Activated CD4-positive, alpha-beta T cell treated with anti-CD3 and anti-CD28 coated beads for 36 hours (primary cell): ENCODE measurements at regions of chr17 and their contacts with region 1.

Region 1: GRCh38 chr17:21043286-21044232 is 748 bp upstream of the USP22 start:
- DNase-seq: peak; percentile 99
- ATAC-seq: peak; percentile 88
- H3K4me3 Mint-ChIP-seq: peak overlapping the region; percentile 76
- H3K27ac Mint-ChIP-seq: peak overlapping the region; percentile 95
- H3K4me1 Mint-ChIP-seq: peaks cover 21% of the 10 kb centered on the region
- H3K27me3 Mint-ChIP-seq: no peaks in the 10 kb centered on the region

Region 2: GRCh38 chr17:19977311-19978208 is 1066.0 kb before region 1 on chr17 and contains the start of gene AKAP10:
- CTCF ChIA-PET with region 1: no interaction called
- POLR2A ChIA-PET with region 1: no interaction called
- intact Hi-C with region 1: loop called in 1 of 2 experiments (anchors 2 kb)
- DNase-seq: peak; percentile 98
- ATAC-seq: peak; percentile 85
- H3K4me3 Mint-ChIP-seq: peak within 1 kb of the TSS; percentile 90
- H3K27ac Mint-ChIP-seq: peak within 1 kb of the TSS; percentile 98
- H3K4me1 Mint-ChIP-seq: peaks cover 48% of the 10 kb centered on the region
- H3K27me3 Mint-ChIP-seq: no peaks in the 10 kb centered on the region
- total RNA-seq, gene AKAP10: 31.6 to 35.9 TPM

Region 3: DNA sequence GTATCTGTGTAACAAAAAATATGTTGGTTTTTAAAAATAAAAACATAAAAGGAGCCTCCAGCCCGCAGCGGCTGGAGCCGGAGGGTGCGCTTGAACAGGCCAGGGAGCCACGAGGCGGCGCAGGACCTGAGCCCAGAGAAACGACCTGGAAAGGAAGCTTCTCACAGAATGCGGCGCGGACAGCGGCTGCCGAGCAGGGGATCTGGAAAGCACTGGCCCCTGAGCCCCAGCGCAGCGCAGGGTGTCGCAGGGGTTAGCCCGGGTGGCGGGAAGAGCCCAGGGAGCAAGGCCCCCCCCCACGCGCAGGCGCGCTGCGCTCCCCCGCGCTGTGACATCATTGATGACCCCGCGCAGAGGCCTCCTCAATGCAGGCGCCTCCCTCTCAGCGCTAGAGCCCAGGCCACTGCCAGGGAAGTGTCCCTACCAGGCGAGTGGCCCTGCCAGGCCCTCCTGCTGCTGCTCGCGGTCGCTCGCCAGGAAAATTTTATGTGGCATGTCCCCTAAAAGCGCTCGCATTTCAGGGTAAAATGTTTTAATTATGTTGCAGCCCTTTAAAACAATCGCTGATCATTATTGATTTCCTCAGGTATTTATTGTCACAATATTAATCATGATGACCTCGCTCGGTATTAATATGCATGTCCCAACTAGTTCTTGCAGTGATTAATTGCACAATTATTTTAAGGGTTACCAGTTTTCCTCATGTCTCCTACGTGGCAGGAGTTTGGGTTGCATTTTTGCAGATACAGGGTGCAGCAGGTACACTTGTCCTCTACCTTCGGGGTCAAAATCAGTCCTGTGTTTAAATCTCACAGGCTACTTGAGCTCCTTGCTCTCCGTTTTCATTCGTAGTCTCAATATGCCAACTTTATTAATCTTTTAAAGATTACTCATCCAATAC is 134.9 kb before region 1 on chr17:
- CTCF ChIA-PET with region 1: no interaction called
- POLR2A ChIA-PET with region 1: no interaction called
- intact Hi-C with region 1: loop called in 1 of 2 experiments (anchors 2 kb)
- DNase-seq: peak; percentile 90
- ATAC-seq: peak; percentile 100
- H3K4me3 Mint-ChIP-seq: peak overlapping the region; percentile 65
- H3K27ac Mint-ChIP-seq: peak overlapping the region; percentile 76
- H3K4me1 Mint-ChIP-seq: peaks cover 3% of the 10 kb centered on the region
- H3K27me3 Mint-ChIP-seq: peaks cover 7% of the 10 kb centered on the region

Region 4: GRCh38 chr17:20981046-20981920 is 62.3 kb before region 1 on chr17:
- CTCF ChIA-PET with region 1: no interaction called
- POLR2A ChIA-PET with region 1: no interaction called
- intact Hi-C with region 1: no loop called
- DNase-seq: no peak
- ATAC-seq: no peak
- H3K4me3 Mint-ChIP-seq: no peak overlapping the region
- H3K27ac Mint-ChIP-seq: no peak overlapping the region
- H3K4me1 Mint-ChIP-seq: no peaks in the 10 kb centered on the region
- H3K27me3 Mint-ChIP-seq: peaks cover 28% of the 10 kb centered on the region

Region 5: DNA sequence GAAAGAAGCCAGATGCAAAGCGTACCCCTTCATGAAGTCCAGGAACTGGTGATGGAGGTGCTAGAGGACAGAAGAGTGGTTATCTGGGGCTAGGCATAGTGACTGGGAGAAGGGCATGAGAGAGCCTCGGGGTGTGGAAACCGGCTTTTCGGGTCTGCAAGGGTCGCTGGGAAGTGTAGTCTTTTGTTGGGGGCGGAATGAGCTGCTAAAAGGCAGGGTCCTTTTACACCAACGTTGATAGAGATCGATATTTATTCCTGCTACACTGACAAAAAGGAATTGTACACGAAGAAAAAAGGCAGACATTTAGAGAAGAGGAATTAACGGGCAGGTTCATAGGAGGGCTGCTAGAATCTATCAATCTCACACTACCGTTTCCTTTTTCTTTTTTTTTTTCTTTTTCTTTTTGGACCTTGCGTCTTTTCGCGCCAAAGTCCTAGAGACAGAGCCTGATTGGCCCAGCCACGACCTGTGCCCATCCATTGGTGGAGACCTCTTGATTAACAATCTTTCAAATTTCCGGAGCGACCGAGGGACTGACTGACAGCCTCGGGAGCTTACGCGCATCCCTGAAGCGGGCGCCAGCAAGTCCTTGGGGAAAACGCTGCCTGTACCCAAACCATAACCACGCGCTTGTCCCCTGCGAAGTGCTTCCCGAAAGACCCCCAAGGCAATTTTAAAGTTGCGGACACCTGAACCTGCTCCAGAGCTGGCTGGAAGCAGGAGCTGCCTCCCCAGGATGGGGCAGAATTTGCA is 55.6 kb after region 1 on chr17:
- CTCF ChIA-PET with region 1: interaction called, 26 read pairs
- POLR2A ChIA-PET with region 1: interaction called, 16 read pairs
- intact Hi-C with region 1: loop called (anchors 1 kb)
- DNase-seq: peak; percentile 89
- ATAC-seq: peak; percentile 99
- H3K4me3 Mint-ChIP-seq: peak overlapping the region; percentile 94
- H3K27ac Mint-ChIP-seq: peak overlapping the region; percentile 92
- H3K4me1 Mint-ChIP-seq: peaks cover 2% of the 10 kb centered on the region
- H3K27me3 Mint-ChIP-seq: no peaks in the 10 kb centered on the region

Region 6: DNA sequence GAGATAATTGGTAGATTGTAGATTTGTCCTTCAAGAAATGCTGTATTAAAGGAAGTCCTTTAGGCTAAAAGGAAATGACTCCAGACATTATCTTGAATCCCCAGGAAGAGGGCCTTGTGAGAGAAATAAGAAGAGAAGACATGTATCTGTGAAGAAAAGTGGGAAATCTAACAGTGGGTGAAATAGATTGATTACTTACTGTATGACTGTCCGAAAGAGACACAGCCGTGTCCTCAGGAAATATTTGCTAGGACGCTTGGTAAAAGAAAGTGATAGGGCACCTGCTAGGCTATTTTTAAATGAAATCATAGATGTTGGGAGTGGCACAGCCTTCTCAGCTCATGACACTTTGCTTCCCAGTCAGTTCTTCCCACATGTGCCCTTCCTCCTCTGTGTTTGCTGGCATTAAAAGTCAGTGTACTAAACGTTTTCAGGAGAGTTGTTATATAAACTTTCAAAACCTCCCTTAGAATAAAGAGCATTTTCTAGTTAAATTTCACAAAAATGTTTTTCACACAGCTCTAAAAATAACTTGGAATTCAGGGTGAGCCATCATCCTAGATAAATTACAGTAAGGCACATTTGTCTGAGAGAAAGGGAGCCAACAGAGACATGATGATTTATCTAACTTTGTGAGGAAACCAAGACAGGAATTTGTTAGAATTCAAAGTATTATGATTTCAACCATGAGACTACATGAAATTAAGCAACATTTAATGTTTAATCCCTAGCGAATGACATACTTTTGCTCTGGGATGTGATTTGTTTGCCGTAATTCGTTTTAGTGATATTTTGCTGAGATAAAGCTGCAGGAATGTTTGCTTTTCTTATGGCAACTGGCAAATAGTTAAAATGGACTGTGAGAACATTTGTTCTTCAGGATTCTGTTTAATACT is 118.2 kb after region 1 on chr17:
- CTCF ChIA-PET with region 1: no interaction called
- POLR2A ChIA-PET with region 1: no interaction called
- intact Hi-C with region 1: no loop called
- DNase-seq: no peak
- ATAC-seq: no peak
- H3K4me3 Mint-ChIP-seq: no peak overlapping the region
- H3K27ac Mint-ChIP-seq: no peak overlapping the region
- H3K4me1 Mint-ChIP-seq: peaks cover 25% of the 10 kb centered on the region
- H3K27me3 Mint-ChIP-seq: no peaks in the 10 kb centered on the region

Region 7: GRCh38 chr17:21284319-21285163 is 241.0 kb after region 1 on chr17 and contains the start of gene MAP2K3:
- CTCF ChIA-PET with region 1: no interaction called
- POLR2A ChIA-PET with region 1: interaction called, 3 read pairs
- intact Hi-C with region 1: loop called (anchors 1 to 2 kb)
- DNase-seq: peak; percentile 99
- ATAC-seq: peak; percentile 76
- H3K4me3 Mint-ChIP-seq: peak within 1 kb of the TSS; percentile 98
- H3K27ac Mint-ChIP-seq: peak within 1 kb of the TSS; percentile 94
- H3K4me1 Mint-ChIP-seq: peaks cover 57% of the 10 kb centered on the region
- H3K27me3 Mint-ChIP-seq: no peaks in the 10 kb centered on the region
- total RNA-seq, gene MAP2K3: 122 to 123 TPM

Region 8: GRCh38 chr17:21511363-21512198 is 468.0 kb after region 1 on chr17:
- CTCF ChIA-PET with region 1: no interaction called
- POLR2A ChIA-PET with region 1: no interaction called
- intact Hi-C with region 1: loop called in 1 of 2 experiments (anchors 5 kb)
- DNase-seq: peak; percentile 82
- ATAC-seq: peak; percentile 87
- H3K4me3 Mint-ChIP-seq: peak overlapping the region; percentile 60
- H3K27ac Mint-ChIP-seq: no peak overlapping the region
- H3K4me1 Mint-ChIP-seq: peaks cover 14% of the 10 kb centered on the region
- H3K27me3 Mint-ChIP-seq: peaks cover 31% of the 10 kb centered on the region